CD8-positive, alpha-beta T cell (primary cell): ENCODE measurements at regions of chr1 and their contacts with region 1.

Region 1: DNA sequence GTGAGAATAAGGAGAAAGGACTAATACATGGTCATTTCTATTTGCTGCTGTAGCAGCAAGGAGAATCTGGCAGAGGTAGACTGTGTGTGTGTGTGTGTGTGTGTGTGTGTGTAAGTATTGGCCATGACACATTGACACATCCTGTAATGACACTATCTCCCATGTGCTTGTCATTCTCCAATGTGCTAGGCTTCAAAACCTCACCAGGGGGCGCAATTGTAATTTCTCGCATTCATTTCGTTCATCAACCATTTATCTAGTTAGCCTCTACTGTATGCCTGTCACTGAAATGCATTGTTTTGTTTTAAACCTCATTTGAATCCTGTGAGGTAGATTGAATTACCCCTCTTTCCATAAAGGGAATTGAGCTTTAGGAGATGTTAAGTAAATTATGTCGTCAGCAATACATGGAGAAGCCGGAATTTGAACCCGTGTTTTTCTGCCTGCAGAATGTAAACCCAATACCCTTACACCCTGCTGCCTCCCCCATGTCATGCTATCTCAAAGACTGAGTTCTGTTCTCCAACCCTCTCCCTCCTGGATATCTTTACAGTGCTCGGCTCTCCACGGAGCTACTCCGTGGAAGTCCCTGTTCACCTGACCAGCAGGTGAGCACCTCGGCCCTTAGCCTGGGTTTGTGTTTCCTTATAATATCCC is 100.8 kb downstream of the UCK2 start:
- DNase-seq: peak in 6 of 9 experiments; percentile 13 to 65 (median 37)
- ATAC-seq: peak; percentile 58
- H3K4me3 ChIP-seq: no peak overlapping the region
- H3K4me3 Mint-ChIP-seq: no peak overlapping the region
- H3K27ac ChIP-seq: no peak overlapping the region
- H3K27ac Mint-ChIP-seq: no peak overlapping the region
- H3K4me1 ChIP-seq: no peaks in the 10 kb centered on the region
- H3K4me1 Mint-ChIP-seq: no peaks in the 10 kb centered on the region
- H3K27me3 ChIP-seq: peaks cover 3 to 4% of the 10 kb centered on the region in 2 experiments
- H3K27me3 Mint-ChIP-seq: peaks cover 28% of the 10 kb centered on the region
- CTCF ChIP-seq: peak; percentile 51

Region 2: GRCh38 chr1:165988817-165989216 is 60.6 kb after region 1 on chr1:
- CTCF ChIA-PET with region 1: no interaction called
- POLR2A ChIA-PET with region 1: no interaction called
- intact Hi-C with region 1: no loop called
- DNase-seq: no peak
- ATAC-seq: no peak
- H3K4me3 ChIP-seq: no peak overlapping the region
- H3K4me3 Mint-ChIP-seq: no peak overlapping the region
- H3K27ac ChIP-seq: no peak overlapping the region
- H3K27ac Mint-ChIP-seq: no peak overlapping the region
- H3K4me1 ChIP-seq: no peaks in the 10 kb centered on the region
- H3K4me1 Mint-ChIP-seq: no peaks in the 10 kb centered on the region
- H3K27me3 ChIP-seq: no peaks in the 10 kb centered on the region
- H3K27me3 Mint-ChIP-seq: peaks cover 5% of the 10 kb centered on the region
- CTCF ChIP-seq: no peak

Region 3: GRCh38 chr1:166479052-166479631 is 550.9 kb after region 1 on chr1:
- CTCF ChIA-PET with region 1: interaction called, 3 read pairs
- POLR2A ChIA-PET with region 1: no interaction called
- intact Hi-C with region 1: loop called in 1 of 2 experiments (anchors 2 kb)
- DNase-seq: peak in 8 of 9 experiments; percentile 4 to 62 (median 38)
- ATAC-seq: peak; percentile 34
- H3K4me3 ChIP-seq: no peak overlapping the region
- H3K4me3 Mint-ChIP-seq: no peak overlapping the region
- H3K27ac ChIP-seq: no peak overlapping the region
- H3K27ac Mint-ChIP-seq: no peak overlapping the region
- H3K4me1 ChIP-seq: no peaks in the 10 kb centered on the region
- H3K4me1 Mint-ChIP-seq: no peaks in the 10 kb centered on the region
- H3K27me3 ChIP-seq: no peaks in the 10 kb centered on the region
- H3K27me3 Mint-ChIP-seq: no peaks in the 10 kb centered on the region
- CTCF ChIP-seq: peak; percentile 86